ENCODE measurements at regions of chr2 and their contacts with region 1.

Region 1: DNA sequence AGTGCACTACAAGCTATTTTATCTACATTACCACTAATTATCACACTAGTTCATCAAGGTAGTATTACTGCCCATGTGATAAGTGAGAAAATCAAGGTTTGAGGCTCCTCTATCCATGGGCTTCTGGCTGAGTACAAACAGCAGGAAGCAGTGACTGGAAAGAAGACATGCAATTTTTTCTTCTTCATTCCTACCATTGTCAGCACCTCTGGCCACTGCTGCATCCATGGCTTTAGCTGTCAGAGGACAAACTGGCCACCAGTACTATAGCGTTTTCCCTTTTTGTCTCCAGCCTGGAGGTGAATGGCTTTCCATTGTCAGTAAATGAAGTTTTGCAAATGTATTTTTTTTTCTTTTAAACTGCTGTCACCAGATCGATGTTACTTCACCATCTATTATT is 674.9 kb downstream of the LRP1B start:
- DNase-seq: no peak
- H3K4me3 Mint-ChIP-seq: no peak overlapping the region
- H3K27ac Mint-ChIP-seq: no peak overlapping the region
- H3K4me1 Mint-ChIP-seq: no peaks in the 10 kb centered on the region
- H3K27me3 Mint-ChIP-seq: no peaks in the 10 kb centered on the region

Region 2: DNA sequence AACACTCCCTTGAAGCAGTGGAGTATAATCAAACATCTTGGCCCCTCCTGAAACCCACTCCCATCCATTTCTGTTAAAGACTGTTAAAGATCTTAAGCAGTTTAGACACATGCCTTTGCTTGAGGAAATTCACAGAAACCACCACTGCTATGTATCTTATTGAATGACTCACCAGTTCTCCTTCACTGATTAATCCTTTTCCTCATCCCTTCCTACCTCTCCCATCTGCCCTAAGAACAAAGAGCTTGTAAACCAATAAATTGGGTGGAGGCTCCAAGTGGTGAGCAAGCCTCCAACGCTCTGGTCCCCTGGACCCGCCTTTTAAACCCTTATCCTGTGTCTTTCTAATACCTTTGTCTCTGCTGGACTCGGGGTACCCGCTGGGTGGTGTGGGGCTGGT is 71.2 kb before region 1 on chr2:
- CTCF ChIA-PET with region 1: no interaction called
- POLR2A ChIA-PET with region 1: interaction called, 12 read pairs
- DNase-seq: no peak
- H3K4me3 Mint-ChIP-seq: no peak overlapping the region
- H3K27ac Mint-ChIP-seq: no peak overlapping the region
- H3K4me1 Mint-ChIP-seq: no peaks in the 10 kb centered on the region
- H3K27me3 Mint-ChIP-seq: no peaks in the 10 kb centered on the region

Region 3: DNA sequence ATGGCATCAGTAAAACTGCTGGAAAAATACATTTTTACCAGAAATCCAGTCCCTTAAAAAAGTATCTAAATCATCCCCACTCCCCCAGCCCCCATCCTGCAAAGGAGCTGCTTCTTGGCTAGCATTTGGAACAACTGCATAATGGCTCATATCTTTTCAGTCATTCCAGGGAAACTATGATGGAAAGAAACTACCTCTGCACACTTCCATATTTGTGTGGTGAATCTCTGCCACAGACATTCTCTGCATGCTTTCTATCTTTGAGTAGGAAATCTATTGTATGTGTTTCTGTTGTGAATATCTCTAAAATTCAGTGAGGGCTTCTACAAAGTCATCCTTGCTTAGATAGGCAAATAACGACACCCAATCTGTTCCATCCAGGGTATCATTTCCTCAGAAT is 42.7 kb after region 1 on chr2:
- CTCF ChIA-PET with region 1: no interaction called
- POLR2A ChIA-PET with region 1: no interaction called
- DNase-seq: no peak
- H3K4me3 Mint-ChIP-seq: no peak overlapping the region
- H3K27ac Mint-ChIP-seq: no peak overlapping the region
- H3K4me1 Mint-ChIP-seq: no peaks in the 10 kb centered on the region
- H3K27me3 Mint-ChIP-seq: no peaks in the 10 kb centered on the region

Measured in activated CD4-positive, alpha-beta T cell treated with anti-CD3 and anti-CD28 coated beads, Interleukin-2, amount 10 ng/mL, durations not matched to agents 7 days and 5 days (primary cell).